GM23248 (cell line): ENCODE measurements at regions of chr7 and their contacts with region 1.

Region 1: DNA sequence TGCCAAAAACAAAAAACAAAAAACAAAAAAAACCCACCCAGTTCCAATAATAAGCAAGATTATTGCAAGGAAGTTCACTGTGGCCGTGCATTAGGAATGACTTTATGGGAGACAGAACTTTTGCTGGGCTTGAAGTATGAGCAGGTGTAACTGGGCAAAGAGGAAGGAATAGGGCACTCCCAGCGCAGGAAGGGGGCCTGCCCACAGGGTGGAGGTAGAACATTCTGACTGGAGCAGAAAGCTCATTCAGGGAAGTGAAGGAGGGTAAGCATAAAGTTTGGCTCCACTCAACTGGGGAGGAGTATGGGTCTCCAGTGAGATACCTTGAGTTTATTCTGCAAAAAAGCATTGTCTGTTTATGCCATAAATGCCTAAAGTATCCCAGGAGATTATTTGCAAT is 42.1 kb upstream of the WIPF3 start:
- DNase-seq: no peak
- H3K4me3 ChIP-seq: no peak overlapping the region
- H3K27ac ChIP-seq: no peak overlapping the region
- H3K4me1 ChIP-seq: no peaks in the 10 kb centered on the region
- H3K27me3 ChIP-seq: peaks cover 38% of the 10 kb centered on the region

Region 2: GRCh38 chr7:30062591-30062990 is 298.4 kb after region 1 on chr7:
- in situ Hi-C with region 1: loop called (anchors 25 kb)
- DNase-seq: peak; percentile 61
- H3K4me3 ChIP-seq: no peak overlapping the region
- H3K27ac ChIP-seq: no peak overlapping the region
- H3K4me1 ChIP-seq: peaks cover 1% of the 10 kb centered on the region; the same call in 1 of the 2 replicates
- H3K27me3 ChIP-seq: no peaks in the 10 kb centered on the region

Region 3: GRCh38 chr7:30556840-30557239 is 792.6 kb after region 1 on chr7:
- in situ Hi-C with region 1: no loop called
- DNase-seq: no peak
- H3K4me3 ChIP-seq: no peak overlapping the region
- H3K27ac ChIP-seq: no peak overlapping the region
- H3K4me1 ChIP-seq: no peaks in the 10 kb centered on the region
- H3K27me3 ChIP-seq: no peaks in the 10 kb centered on the region